Activated CD4-positive, alpha-beta T cell treated with anti-CD3 and anti-CD28 coated beads for 36 hours (primary cell): ENCODE measurements at regions of chr16 and their contacts with region 1.

Region 1: DNA sequence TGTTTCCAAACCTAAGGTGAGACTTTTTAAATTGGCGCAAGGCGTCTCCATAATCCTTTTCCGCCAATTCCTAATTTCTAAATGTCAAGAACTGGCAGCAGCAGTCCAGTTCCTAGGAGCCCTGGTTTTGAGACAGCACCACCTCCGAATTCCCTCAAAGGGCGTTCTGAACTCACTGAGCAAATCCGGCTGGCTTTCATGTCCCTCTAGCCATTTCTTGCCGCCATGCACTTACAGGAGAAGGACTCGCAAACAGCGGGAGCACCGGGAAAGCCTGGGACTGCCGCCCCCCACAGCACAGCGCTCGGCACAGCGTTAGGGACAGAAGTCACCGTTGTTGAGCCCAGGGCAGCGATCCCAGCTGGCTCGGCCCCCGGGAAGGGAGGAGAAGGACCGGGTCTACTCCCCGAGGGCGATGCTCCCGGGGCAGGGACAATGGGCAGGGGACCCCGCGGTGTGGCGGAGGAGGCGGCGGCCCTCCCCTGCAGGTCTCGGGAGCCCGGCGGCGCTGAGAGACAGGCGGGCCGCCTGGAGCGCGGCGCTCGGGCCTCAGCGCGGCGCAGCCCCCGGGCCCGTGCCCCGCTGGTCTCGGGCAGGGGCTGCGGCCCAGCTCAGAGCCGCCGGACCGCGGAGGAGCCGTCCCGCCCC is 545 bp downstream of the ARHGAP17 start:
- DNase-seq: peak; percentile 38
- ATAC-seq: peak; percentile 8
- H3K4me3 Mint-ChIP-seq: peak overlapping the region; percentile 96
- H3K27ac Mint-ChIP-seq: peak overlapping the region; percentile 94
- H3K4me1 Mint-ChIP-seq: peaks cover 81% of the 10 kb centered on the region
- H3K27me3 Mint-ChIP-seq: no peaks in the 10 kb centered on the region

Region 2: GRCh38 chr16:23842137-23842600 is 1172.5 kb before region 1 on chr16:
- CTCF ChIA-PET with region 1: no interaction called
- POLR2A ChIA-PET with region 1: no interaction called
- intact Hi-C with region 1: loop called in 1 of 2 experiments (anchors 5 kb)
- DNase-seq: peak; percentile 67
- ATAC-seq: peak; percentile 91
- H3K4me3 Mint-ChIP-seq: no peak overlapping the region
- H3K27ac Mint-ChIP-seq: peak overlapping the region; percentile 85
- H3K4me1 Mint-ChIP-seq: peaks cover 83% of the 10 kb centered on the region
- H3K27me3 Mint-ChIP-seq: no peaks in the 10 kb centered on the region

Region 3: GRCh38 chr16:24729362-24729984 is 285.2 kb before region 1 on chr16 and contains the start of gene TNRC6A:
- CTCF ChIA-PET with region 1: interaction called, 3 read pairs
- POLR2A ChIA-PET with region 1: no interaction called
- intact Hi-C with region 1: loop called in 1 of 2 experiments (anchors 5 kb)
- DNase-seq: peak; percentile 87
- ATAC-seq: peak; percentile 77
- H3K4me3 Mint-ChIP-seq: peak within 1 kb of the TSS; percentile 99
- H3K27ac Mint-ChIP-seq: peak within 1 kb of the TSS; percentile 99
- H3K4me1 Mint-ChIP-seq: peaks cover 44% of the 10 kb centered on the region
- H3K27me3 Mint-ChIP-seq: no peaks in the 10 kb centered on the region
- total RNA-seq, gene TNRC6A: 34.6 to 46.1 TPM

Region 4: GRCh38 chr16:25045696-25046381 is 31.2 kb after region 1 on chr16:
- CTCF ChIA-PET with region 1: interaction called, 5 read pairs
- POLR2A ChIA-PET with region 1: interaction called, 12 read pairs
- intact Hi-C with region 1: loop called in 1 of 2 experiments (anchors 1 kb)
- DNase-seq: no peak
- ATAC-seq: no peak
- H3K4me3 Mint-ChIP-seq: no peak overlapping the region
- H3K27ac Mint-ChIP-seq: no peak overlapping the region
- H3K4me1 Mint-ChIP-seq: peaks cover 43% of the 10 kb centered on the region
- H3K27me3 Mint-ChIP-seq: no peaks in the 10 kb centered on the region

Region 5: DNA sequence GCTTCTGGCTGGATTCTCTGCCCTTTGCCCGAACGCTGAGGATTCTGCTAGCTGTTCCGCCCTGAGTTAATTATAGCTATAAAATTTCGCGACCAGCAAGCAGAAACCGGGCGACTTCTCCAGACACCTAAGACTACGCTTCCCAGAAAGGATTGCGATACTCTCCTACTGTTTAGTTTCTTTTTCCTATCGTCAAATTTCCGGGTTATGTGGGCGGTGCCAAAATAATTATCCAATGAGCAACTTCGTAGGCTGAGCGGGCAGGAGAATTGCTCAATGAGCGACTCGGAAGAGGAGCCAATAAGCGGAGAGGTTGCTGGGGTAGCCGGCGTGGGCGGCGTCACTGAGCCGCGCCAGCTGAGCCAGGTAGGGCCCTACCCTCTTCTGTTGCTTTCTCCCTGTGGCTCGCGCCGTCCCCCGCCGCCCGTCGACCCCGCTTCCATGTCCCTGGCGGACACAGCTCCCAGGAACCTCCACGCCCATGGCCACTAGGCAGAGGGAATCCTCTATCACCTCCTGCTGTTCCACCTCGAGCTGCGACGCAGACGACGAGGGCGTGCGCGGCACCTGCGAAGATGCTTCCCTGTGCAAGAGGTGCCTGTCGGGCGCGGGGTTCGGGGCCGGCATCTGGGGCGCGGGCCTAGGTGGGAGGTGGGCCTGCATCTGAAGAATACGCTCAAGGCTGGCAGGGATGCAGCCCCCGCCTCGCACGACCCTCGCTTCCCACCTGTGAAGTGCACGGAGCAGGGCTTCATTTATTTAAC is 97.0 kb after region 1 on chr16 and contains the start of gene LCMT1:
- CTCF ChIA-PET with region 1: no interaction called
- POLR2A ChIA-PET with region 1: interaction called, 4 read pairs
- intact Hi-C with region 1: loop called in 1 of 2 experiments (anchors 1 kb)
- DNase-seq: peak; percentile 96
- ATAC-seq: peak; percentile 79
- H3K4me3 Mint-ChIP-seq: peak within 1 kb of the TSS; percentile 87
- H3K27ac Mint-ChIP-seq: peak within 1 kb of the TSS; percentile 99
- H3K4me1 Mint-ChIP-seq: peaks cover 52% of the 10 kb centered on the region
- H3K27me3 Mint-ChIP-seq: no peaks in the 10 kb centered on the region
- total RNA-seq, gene LCMT1: 33.3 to 36.2 TPM

Region 6: DNA sequence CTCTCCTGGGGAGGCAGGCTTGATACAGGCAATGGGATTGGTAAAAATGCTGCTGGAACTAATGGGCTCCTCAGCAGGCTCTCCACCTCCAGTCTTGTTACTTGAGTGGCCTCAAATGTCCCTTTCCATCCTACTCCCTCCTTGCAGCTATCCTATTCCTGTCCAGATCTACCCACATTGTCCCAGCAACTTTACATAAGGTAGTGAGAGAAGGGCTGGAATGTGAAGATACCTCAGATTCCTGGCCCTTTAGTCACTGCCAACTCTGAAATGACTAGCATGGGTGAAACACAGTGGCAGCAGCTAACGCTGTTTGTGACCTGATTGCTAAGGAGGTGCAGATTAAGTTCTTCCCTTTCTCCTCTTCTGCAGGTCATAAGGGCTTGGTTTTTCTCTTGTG is 467.0 kb after region 1 on chr16:
- CTCF ChIA-PET with region 1: no interaction called
- POLR2A ChIA-PET with region 1: no interaction called
- intact Hi-C with region 1: no loop called
- DNase-seq: no peak
- ATAC-seq: no peak
- H3K4me3 Mint-ChIP-seq: no peak overlapping the region
- H3K27ac Mint-ChIP-seq: no peak overlapping the region
- H3K4me1 Mint-ChIP-seq: no peaks in the 10 kb centered on the region
- H3K27me3 Mint-ChIP-seq: peaks cover 2% of the 10 kb centered on the region

Region 7: GRCh38 chr16:26598061-26598460 is 1583.4 kb after region 1 on chr16:
- CTCF ChIA-PET with region 1: no interaction called
- POLR2A ChIA-PET with region 1: no interaction called
- intact Hi-C with region 1: loop called in 1 of 2 experiments (anchors 10 kb)
- DNase-seq: peak; percentile 83
- ATAC-seq: peak; percentile 91
- H3K4me3 Mint-ChIP-seq: peak overlapping the region; percentile 20
- H3K27ac Mint-ChIP-seq: peak overlapping the region; percentile 82
- H3K4me1 Mint-ChIP-seq: peaks cover 54% of the 10 kb centered on the region
- H3K27me3 Mint-ChIP-seq: peaks cover 19% of the 10 kb centered on the region